Gastrocnemius medialis (tissue), 4 donors: ENCODE measurements at regions of chr6 and their contacts with region 1.

Region 1: DNA sequence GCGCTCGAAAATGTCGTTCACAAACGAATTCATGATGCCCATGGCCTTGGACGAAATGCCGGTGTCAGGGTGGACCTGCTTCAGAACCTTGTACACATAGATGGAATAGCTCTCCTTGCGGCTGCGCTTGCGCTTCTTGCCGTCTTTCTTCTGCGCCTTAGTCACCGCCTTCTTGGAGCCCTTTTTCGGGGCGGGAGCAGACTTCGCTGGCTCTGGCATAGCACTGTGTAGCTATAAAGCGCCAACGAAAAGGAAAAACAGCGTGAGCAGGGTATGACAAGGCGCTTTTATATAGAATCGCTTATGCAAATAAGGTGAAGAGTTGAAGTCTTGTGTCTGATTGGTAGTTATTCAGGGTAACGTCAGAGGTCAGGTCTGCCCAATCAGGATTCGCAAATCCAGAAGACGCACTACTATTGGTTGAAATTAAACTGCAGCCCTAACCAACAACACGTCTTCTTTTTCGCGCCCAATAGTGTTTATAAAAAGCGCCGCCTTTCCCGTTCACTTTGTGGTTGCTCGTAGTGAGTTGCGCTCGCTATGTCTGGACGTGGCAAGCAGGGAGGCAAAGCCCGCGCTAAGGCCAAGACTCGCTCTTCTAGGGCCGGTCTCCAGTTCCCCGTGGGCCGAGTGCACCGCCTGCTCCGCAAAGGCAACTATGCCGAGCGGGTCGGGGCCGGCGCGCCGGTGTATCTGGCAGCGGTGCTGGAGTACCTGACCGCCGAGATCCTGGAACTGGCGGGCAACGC is 114.8 kb upstream of the PRSS16 start:
- DNase-seq: peak; percentile 82 to 88
- ATAC-seq: peak; percentile 99
- H3K4me3 ChIP-seq: peak overlapping the region; percentile 61 to 67 (median 65)
- H3K27ac ChIP-seq: peak overlapping the region; percentile 79 to 83 (median 81)
- H3K4me1 ChIP-seq: peaks cover 0 to 4% of the 10 kb centered on the region in 2 donors
- H3K27me3 ChIP-seq: no peaks in the 10 kb centered on the region
- CTCF ChIP-seq: no peak
- POLR2A ChIP-seq: peak; percentile 83 to 90

Region 2: GRCh38 chr6:26103770-26104456 is 1028.8 kb before region 1 on chr6:
- in situ Hi-C with region 1: loop called in 2 of 4 experiments (anchors 25 kb)
- intact Hi-C with region 1: no loop called
- DNase-seq: peak; percentile 76 to 87
- ATAC-seq: peak; percentile 98 to 99
- H3K4me3 ChIP-seq: peak overlapping the region; percentile 58 to 68 (median 63)
- H3K27ac ChIP-seq: peak overlapping the region; percentile 77 to 86 (median 84)
- H3K4me1 ChIP-seq: peaks cover 0 to 11% of the 10 kb centered on the region in 2 donors
- H3K27me3 ChIP-seq: no peaks in the 10 kb centered on the region
- CTCF ChIP-seq: peak; percentile 30 to 52 (median 40)
- POLR2A ChIP-seq: peak; percentile 86 to 88

Region 3: DNA sequence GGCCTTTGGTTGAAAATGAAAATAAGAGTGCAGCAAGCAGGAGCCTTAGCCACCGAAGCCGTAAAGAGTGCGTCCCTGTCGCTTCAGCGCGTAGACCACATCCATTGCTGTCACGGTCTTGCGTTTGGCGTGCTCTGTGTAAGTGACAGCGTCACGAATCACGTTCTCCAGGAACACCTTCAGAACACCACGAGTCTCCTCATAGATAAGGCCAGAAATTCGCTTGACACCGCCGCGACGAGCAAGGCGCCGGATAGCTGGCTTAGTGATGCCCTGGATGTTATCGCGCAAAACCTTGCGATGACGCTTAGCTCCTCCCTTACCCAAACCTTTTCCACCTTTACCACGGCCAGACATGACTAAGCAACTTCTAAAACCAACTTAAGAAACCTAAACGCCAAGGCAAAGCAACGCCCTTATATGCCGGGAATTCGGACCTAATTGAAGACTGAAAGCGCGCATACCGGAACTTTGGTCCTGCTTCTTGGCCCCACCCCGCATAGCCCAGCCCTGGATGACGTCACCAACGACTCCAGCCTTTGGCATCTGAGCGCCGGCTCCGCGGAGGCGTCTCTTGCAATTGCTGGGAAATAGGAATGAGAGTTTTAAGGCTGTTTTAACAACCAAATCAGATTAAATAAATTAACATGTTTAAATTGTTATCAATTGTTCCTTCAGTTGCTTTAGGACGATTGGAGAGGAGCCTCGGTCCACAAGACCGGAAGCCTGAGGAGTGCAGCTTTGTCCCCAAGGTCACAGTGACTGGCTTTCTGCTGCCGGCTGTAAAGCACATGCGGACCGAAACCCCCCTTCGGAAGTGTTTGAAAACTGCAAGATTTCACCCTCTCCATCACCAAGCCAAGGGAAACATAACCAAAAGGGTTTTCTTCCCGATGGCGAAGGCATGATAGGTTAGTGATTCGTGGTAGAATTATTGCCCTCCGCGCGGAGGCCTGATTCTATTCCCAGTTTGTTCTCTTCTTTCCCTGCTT is 847.3 kb before region 1 on chr6:
- in situ Hi-C with region 1: loop called in 1 of 4 experiments (anchors 25 kb)
- intact Hi-C with region 1: no loop called
- DNase-seq: peak; percentile 96
- ATAC-seq: peak; percentile 91 to 92
- H3K4me3 ChIP-seq: peak overlapping the region; percentile 50 to 84 (median 73)
- H3K27ac ChIP-seq: peak overlapping the region; percentile 91 to 92 (median 92)
- H3K4me1 ChIP-seq: peaks cover 17 to 28% of the 10 kb centered on the region in 2 donors
- H3K27me3 ChIP-seq: no peaks in the 10 kb centered on the region
- CTCF ChIP-seq: no peak
- POLR2A ChIP-seq: peak; percentile 66 to 72

Region 4: GRCh38 chr6:27146706-27147505 is 14.2 kb after region 1 on chr6:
- in situ Hi-C with region 1: no loop called
- intact Hi-C with region 1: loop called (anchors 2 kb)
- DNase-seq: peak; percentile 49 to 56
- ATAC-seq: peak; percentile 98 to 99
- H3K4me3 ChIP-seq: peak overlapping the region; percentile 60 to 65 (median 62)
- H3K27ac ChIP-seq: peak overlapping the region; percentile 71 to 83 (median 78)
- H3K4me1 ChIP-seq: peaks cover 0 to 7% of the 10 kb centered on the region in 2 donors
- H3K27me3 ChIP-seq: peaks cover 20 to 35% (median 23%) of the 10 kb centered on the region in 3 donors
- CTCF ChIP-seq: no peak
- POLR2A ChIP-seq: peak; percentile 73 to 81

Region 5: DNA sequence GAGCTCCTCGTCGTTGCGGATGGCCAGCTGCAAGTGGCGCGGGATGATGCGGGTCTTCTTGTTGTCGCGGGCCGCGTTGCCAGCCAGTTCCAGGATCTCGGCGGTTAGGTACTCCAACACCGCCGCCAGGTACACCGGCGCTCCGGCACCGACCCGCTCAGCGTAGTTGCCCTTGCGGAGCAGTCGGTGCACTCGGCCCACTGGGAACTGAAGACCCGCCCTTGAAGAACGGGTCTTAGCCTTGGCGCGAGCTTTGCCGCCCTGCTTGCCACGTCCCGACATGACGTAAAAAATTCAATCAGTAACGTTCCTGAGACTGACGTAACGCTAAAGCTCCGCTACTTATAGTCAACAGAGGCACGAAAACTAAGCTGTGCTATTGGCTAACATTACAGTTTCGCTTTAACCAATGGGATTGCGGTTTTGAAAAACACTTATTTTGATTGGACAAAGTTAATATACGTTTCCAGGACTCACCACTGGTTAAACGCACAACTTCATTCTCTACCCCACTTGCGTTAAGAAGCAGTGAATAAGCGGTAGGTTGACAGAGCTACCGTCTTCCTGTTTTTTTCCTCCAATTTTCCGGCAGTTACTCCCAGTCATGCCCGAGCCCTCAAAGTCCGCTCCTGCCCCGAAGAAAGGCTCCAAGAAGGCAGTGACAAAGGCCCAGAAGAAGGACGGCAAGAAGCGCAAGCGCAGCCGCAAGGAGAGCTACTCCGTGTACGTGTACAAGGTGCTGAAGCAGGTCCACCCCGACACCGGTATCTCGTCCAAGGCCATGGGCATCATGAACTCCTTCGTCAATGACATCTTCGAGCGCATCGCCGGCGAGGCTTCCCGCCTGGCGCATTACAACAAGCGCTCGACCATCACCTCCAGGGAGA is 705.6 kb after region 1 on chr6:
- in situ Hi-C with region 1: no loop called
- intact Hi-C with region 1: loop called (anchors 2 kb)
- DNase-seq: peak; percentile 52 to 60
- ATAC-seq: peak; percentile 99
- H3K4me3 ChIP-seq: peak overlapping the region; percentile 75 to 91 (median 76)
- H3K27ac ChIP-seq: peak overlapping the region; percentile 89 to 94 (median 93)
- H3K4me1 ChIP-seq: peaks cover 21 to 33% of the 10 kb centered on the region in 2 donors
- H3K27me3 ChIP-seq: no peaks in the 10 kb centered on the region
- CTCF ChIP-seq: peak in 2 of 5 experiments; percentile 7 to 14
- POLR2A ChIP-seq: peak; percentile 81 to 94